ENCODE measurements at regions of chr2 and their contacts with region 1.

Region 1: GRCh38 chr2:44044281-44044720 is 48.5 kb upstream of the LRPPRC start:
- DNase-seq: peak; percentile 83
- ATAC-seq: peak; percentile 100
- H3K4me3 ChIP-seq: peak overlapping the region in 1 of 3 experiments; percentile 57; a peak in 1 of 6 replicates
- H3K27ac ChIP-seq: no peak overlapping the region
- H3K4me1 ChIP-seq: peaks cover 5% of the 10 kb centered on the region; the same call in 1 of the 2 replicates
- H3K27me3 ChIP-seq: peaks cover 0 to 11% of the 10 kb centered on the region in 2 experiments; a peak in 2 of 5 replicates
- CTCF ChIP-seq: peak; percentile 99
- EP300 ChIP-seq: no peak
- POLR2A ChIP-seq: no peak
- RAD21 ChIP-seq: peak; percentile 98

Region 2: GRCh38 chr2:43467891-43468290 is 576.4 kb before region 1 on chr2:
- CTCF ChIA-PET with region 1: no interaction called
- POLR2A ChIA-PET with region 1: no interaction called
- in situ Hi-C with region 1: no loop called
- intact Hi-C with region 1: no loop called
- DNase-seq: no peak
- ATAC-seq: no peak
- H3K4me3 ChIP-seq: no peak overlapping the region
- H3K27ac ChIP-seq: no peak overlapping the region
- H3K4me1 ChIP-seq: peaks cover 51% of the 10 kb centered on the region
- H3K27me3 ChIP-seq: no peaks in the 10 kb centered on the region
- CTCF ChIP-seq: no peak
- EP300 ChIP-seq: no peak
- POLR2A ChIP-seq: no peak
- RAD21 ChIP-seq: no peak

Region 3: DNA sequence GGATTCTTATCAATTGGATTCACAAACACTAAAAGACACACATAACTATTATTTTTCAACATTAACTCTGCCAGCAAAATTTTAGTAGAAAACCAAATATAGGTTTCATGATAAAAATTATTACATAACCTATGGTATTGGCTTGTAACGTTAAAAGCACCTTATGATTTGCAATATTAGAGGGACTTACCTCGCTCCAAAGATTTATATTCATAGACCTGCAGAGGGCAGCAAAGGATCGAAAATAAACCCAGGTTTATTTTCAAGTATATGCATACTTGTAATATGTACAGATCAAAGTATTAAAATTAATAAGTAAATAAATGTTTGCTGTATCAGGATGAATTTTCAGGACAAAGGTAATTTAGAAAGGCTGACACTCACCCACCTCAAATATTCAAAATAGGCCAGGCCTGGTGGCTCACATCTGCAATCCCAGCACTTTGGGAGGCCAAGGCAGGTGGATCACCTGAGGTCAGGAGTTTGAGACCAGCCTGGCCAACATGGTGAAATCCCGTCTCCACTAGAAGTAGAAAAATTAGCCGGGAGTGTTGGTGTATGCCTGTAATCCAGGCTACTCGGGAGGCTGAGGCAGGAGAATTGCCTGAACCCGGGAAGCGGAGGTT is 93.8 kb before region 1 on chr2:
- CTCF ChIA-PET with region 1: no interaction called
- POLR2A ChIA-PET with region 1: no interaction called
- in situ Hi-C with region 1: no loop called
- intact Hi-C with region 1: no loop called
- DNase-seq: peak; percentile 54
- ATAC-seq: peak; percentile 82
- H3K4me3 ChIP-seq: no peak overlapping the region
- H3K27ac ChIP-seq: no peak overlapping the region
- H3K4me1 ChIP-seq: no peaks in the 10 kb centered on the region
- H3K27me3 ChIP-seq: no peaks in the 10 kb centered on the region
- CTCF ChIP-seq: peak; percentile 23
- EP300 ChIP-seq: no peak
- POLR2A ChIP-seq: no peak
- RAD21 ChIP-seq: no peak

Region 4: GRCh38 chr2:44167940-44168680 is 123.8 kb after region 1 on chr2:
- CTCF ChIA-PET with region 1: no interaction called
- POLR2A ChIA-PET with region 1: interaction called, 6 read pairs
- in situ Hi-C with region 1: no loop called
- intact Hi-C with region 1: loop called (anchors 1 kb)
- DNase-seq: peak; percentile 100
- ATAC-seq: peak; percentile 92
- H3K4me3 ChIP-seq: peak overlapping the region; percentile 58 to 75 (median 60)
- H3K27ac ChIP-seq: peak overlapping the region; percentile 96
- H3K4me1 ChIP-seq: peaks cover 33% of the 10 kb centered on the region
- H3K27me3 ChIP-seq: no peaks in the 10 kb centered on the region; a peak in 1 of 5 replicates
- CTCF ChIP-seq: no peak
- EP300 ChIP-seq: peak in 1 of 2 experiments; percentile 16; a peak in 2 of 4 replicates
- POLR2A ChIP-seq: peak; percentile 51 to 78
- RAD21 ChIP-seq: no peak

Region 5: DNA sequence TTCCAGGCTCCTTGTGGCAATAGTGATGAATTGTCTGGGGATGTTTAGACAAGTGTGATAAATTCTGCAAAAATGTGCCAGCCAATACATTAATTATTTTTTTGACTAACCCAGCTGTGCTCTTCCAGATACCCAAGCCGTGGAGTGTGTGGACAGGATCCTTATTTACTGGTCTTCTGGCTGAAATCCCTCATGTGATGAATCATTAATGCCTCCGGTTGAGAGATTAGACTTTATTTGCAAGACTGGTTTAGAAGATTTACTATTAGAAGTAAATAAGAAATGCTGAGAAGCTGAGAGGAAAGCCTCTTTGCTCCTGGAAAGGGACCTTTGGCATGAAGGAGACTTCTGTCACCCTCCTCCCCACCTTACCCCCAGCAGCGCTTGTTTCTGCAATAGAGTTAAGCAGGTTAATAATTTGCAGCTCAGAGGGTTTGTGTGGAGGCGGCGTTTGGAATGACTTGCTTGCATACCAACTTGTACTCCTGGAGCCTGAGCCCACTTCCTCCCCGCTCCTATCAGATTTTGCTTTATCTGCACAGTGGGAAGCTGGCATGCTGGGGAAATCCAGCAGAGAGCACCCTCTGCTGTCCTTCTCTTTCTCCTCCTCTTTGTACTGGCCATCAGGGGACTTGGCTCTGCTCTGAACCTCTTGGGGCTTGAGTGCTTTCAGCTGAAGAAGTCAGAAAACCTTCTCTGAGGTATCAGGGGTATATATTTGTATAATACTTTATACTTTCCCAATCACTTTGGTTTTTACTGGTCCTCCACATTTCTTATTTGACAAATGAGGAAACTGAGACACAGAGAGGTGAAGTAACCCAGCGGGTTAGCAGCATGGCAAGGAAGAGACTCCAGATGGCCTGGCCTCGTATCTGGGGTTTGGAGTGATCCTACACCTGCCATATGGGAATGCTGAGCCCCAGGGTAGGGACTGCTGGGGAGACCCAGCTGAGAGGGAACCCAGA is 247.3 kb after region 1 on chr2:
- CTCF ChIA-PET with region 1: interaction called, 14 read pairs
- POLR2A ChIA-PET with region 1: no interaction called
- in situ Hi-C with region 1: no loop called
- intact Hi-C with region 1: loop called (anchors 1 kb)
- DNase-seq: peak; percentile 95
- ATAC-seq: peak; percentile 98
- H3K4me3 ChIP-seq: peak overlapping the region in 2 of 3 experiments; percentile 12 to 13; a peak in 1 of 6 replicates
- H3K27ac ChIP-seq: no peak overlapping the region
- H3K4me1 ChIP-seq: peaks cover 64% of the 10 kb centered on the region
- H3K27me3 ChIP-seq: peaks cover 2 to 6% of the 10 kb centered on the region in 2 experiments; a peak in 2 of 5 replicates
- CTCF ChIP-seq: peak; percentile 94
- EP300 ChIP-seq: peak in 1 of 2 experiments; percentile 46; a peak in 1 of 4 replicates
- POLR2A ChIP-seq: no peak
- RAD21 ChIP-seq: peak; percentile 95

Region 6: DNA sequence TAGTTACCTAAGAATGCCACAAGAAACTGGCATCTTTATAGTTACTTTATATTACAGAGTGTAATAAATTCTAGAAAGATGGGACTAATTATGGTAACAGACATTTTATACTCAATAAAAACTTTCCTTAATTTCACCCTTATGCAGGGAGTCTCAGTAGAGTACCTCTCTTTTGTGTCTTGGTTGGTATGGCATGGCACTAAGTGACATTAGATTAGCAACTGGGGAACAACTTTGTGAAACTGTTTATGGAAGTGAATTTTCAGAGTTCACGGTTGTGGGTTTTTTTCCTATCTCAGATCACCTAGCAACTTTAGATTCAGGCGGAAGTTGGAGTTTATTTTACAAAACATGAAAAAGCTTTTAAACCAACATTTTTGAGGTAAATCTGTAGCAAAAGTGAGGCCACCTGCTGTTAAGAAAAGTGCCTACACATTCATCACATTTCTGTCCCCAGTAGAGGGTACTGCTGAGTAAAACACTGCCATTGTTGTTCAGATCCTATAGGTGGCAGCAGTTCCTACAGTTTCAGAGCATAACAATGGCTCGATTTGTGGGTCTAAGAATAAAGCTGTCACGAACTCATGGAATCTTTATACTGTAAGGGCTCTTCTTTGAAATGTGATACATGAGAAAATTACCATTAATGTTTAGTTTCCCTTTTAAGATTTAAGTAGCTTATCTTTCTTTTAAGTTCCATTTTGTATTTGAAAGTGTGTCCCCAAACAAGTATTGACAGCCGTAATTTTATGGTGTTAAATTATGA is 435.0 kb after region 1 on chr2:
- CTCF ChIA-PET with region 1: interaction called, 17 read pairs
- POLR2A ChIA-PET with region 1: interaction called, 3 read pairs
- in situ Hi-C with region 1: no loop called
- intact Hi-C with region 1: loop called (anchors 1 kb)
- DNase-seq: peak; percentile 89
- ATAC-seq: peak; percentile 99
- H3K4me3 ChIP-seq: no peak overlapping the region
- H3K27ac ChIP-seq: no peak overlapping the region
- H3K4me1 ChIP-seq: no peaks in the 10 kb centered on the region
- H3K27me3 ChIP-seq: no peaks in the 10 kb centered on the region
- CTCF ChIP-seq: peak; percentile 99
- EP300 ChIP-seq: no peak
- POLR2A ChIP-seq: no peak
- RAD21 ChIP-seq: peak; percentile 93

Measured in HepG2 (cell line).